T-cell (primary cell): ENCODE measurements at regions of chr3 and their contacts with region 1.

Region 1: GRCh38 chr3:94036909-94037507 is 8.6 kb upstream of the STX19 start:
- DNase-seq: peak in 1 of 35 experiments; percentile 32
- ATAC-seq: no peak
- H3K4me3 ChIP-seq: no peak overlapping the region
- H3K4me3 Mint-ChIP-seq: no peak overlapping the region
- H3K27ac ChIP-seq: no peak overlapping the region
- H3K27ac Mint-ChIP-seq: no peak overlapping the region
- H3K4me1 ChIP-seq: no peaks in the 10 kb centered on the region
- H3K4me1 Mint-ChIP-seq: no peaks in the 10 kb centered on the region
- H3K27me3 ChIP-seq: no peaks in the 10 kb centered on the region
- H3K27me3 Mint-ChIP-seq: no peaks in the 10 kb centered on the region

Region 2: GRCh38 chr3:94050546-94050945 is 13.5 kb after region 1 on chr3:
- CTCF ChIA-PET with region 1: interaction called in 1 of 2 experiments, 3 read pairs
- POLR2A ChIA-PET with region 1: interaction called in 1 of 2 experiments, 12 read pairs
- DNase-seq: no peak
- ATAC-seq: no peak
- H3K4me3 ChIP-seq: no peak overlapping the region
- H3K4me3 Mint-ChIP-seq: no peak overlapping the region
- H3K27ac ChIP-seq: no peak overlapping the region
- H3K27ac Mint-ChIP-seq: no peak overlapping the region
- H3K4me1 ChIP-seq: no peaks in the 10 kb centered on the region
- H3K4me1 Mint-ChIP-seq: no peaks in the 10 kb centered on the region
- H3K27me3 ChIP-seq: no peaks in the 10 kb centered on the region
- H3K27me3 Mint-ChIP-seq: no peaks in the 10 kb centered on the region